Naive thymus-derived CD4-positive, alpha-beta T cell (primary cell): ENCODE measurements at regions of chr4 and their contacts with region 1.

Region 1: DNA sequence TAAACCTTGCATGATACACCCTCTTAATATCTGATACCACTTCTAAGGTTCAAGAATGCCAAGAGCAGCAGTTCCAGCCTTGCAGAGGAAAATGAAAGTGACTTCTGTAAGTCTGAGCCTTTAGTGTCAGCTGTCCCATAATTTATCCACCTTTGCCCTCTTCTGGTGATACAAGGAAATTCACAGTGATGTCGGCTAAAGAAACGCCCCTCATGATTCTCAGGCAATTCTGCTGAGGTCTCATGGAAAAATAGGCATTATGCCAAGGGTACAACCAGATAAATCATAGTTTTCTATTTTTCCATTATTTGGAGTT is 172.2 kb upstream of the CXCL13 start:
- DNase-seq: peak in 6 of 9 donors; percentile 20 to 47 (median 30)
- ATAC-seq: peak; percentile 69
- H3K4me3 ChIP-seq: no peak overlapping the region
- H3K4me3 Mint-ChIP-seq: peak overlapping the region in 3 of 10 donors; percentile 19 to 46 (median 32)
- H3K27ac ChIP-seq: no peak overlapping the region
- H3K27ac Mint-ChIP-seq: no peak overlapping the region
- H3K4me1 ChIP-seq: no peaks in the 10 kb centered on the region
- H3K4me1 Mint-ChIP-seq: peaks cover 0 to 9% (median 4%) of the 10 kb centered on the region in 7 donors
- H3K27me3 ChIP-seq: no peaks in the 10 kb centered on the region
- H3K27me3 Mint-ChIP-seq: peaks cover 0 to 4% (median 0%) of the 10 kb centered on the region in 5 donors

Region 2: GRCh38 chr4:76179398-76180318 is 1253.7 kb before region 1 on chr4:
- CTCF ChIA-PET with region 1: no interaction called
- POLR2A ChIA-PET with region 1: no interaction called
- intact Hi-C with region 1: loop called in 1 of 2 experiments (anchors 5 kb)
- DNase-seq: peak; percentile 63 to 82 (median 72)
- ATAC-seq: peak; percentile 95
- H3K4me3 ChIP-seq: no peak overlapping the region
- H3K4me3 Mint-ChIP-seq: no peak overlapping the region
- H3K27ac ChIP-seq: no peak overlapping the region
- H3K27ac Mint-ChIP-seq: peak overlapping the region in 2 of 9 donors; percentile 27 to 53
- H3K4me1 ChIP-seq: no peaks in the 10 kb centered on the region
- H3K4me1 Mint-ChIP-seq: peaks cover 0 to 3% (median 0%) of the 10 kb centered on the region in 7 donors
- H3K27me3 ChIP-seq: no peaks in the 10 kb centered on the region
- H3K27me3 Mint-ChIP-seq: no peaks in the 10 kb centered on the region

Region 3: DNA sequence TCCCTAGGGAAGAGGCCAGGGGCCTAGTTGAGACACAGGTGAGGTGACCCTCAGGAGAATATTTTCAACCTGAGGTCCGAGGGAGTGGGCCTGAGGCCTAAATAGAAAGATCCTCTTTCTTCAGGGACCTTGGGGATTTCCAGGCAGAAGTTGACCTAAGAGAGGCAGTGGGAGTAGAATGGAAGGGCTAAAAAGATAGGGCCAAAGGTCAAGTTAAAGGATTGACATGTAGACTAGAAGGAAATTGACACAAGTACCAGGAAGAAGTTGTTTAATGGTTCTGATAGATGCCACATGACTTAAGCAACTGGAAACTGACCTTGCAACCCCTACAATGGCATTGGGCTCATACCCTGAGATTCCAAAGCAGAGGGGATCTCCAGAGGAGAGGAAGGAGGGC is 921.4 kb before region 1 on chr4:
- CTCF ChIA-PET with region 1: no interaction called
- POLR2A ChIA-PET with region 1: no interaction called
- intact Hi-C with region 1: loop called in 1 of 2 experiments (anchors 1 kb)
- DNase-seq: no peak
- ATAC-seq: no peak
- H3K4me3 ChIP-seq: no peak overlapping the region
- H3K4me3 Mint-ChIP-seq: no peak overlapping the region
- H3K27ac ChIP-seq: no peak overlapping the region
- H3K27ac Mint-ChIP-seq: no peak overlapping the region
- H3K4me1 ChIP-seq: no peaks in the 10 kb centered on the region
- H3K4me1 Mint-ChIP-seq: no peaks in the 10 kb centered on the region
- H3K27me3 ChIP-seq: no peaks in the 10 kb centered on the region
- H3K27me3 Mint-ChIP-seq: peaks cover 0 to 6% (median 4%) of the 10 kb centered on the region in 5 donors

Region 4: GRCh38 chr4:77240469-77241066 is 192.8 kb before region 1 on chr4:
- CTCF ChIA-PET with region 1: interaction called, 3 read pairs
- POLR2A ChIA-PET with region 1: no interaction called
- intact Hi-C with region 1: loop called in 1 of 2 experiments (anchors 2 kb)
- DNase-seq: peak in 8 of 9 donors; percentile 11 to 59 (median 30)
- ATAC-seq: peak; percentile 47
- H3K4me3 ChIP-seq: no peak overlapping the region
- H3K4me3 Mint-ChIP-seq: no peak overlapping the region
- H3K27ac ChIP-seq: no peak overlapping the region
- H3K27ac Mint-ChIP-seq: peak overlapping the region in 1 of 9 donors; percentile 10
- H3K4me1 ChIP-seq: no peaks in the 10 kb centered on the region
- H3K4me1 Mint-ChIP-seq: no peaks in the 10 kb centered on the region
- H3K27me3 ChIP-seq: no peaks in the 10 kb centered on the region
- H3K27me3 Mint-ChIP-seq: peaks cover 3 to 12% (median 6%) of the 10 kb centered on the region in 5 donors

Region 5: DNA sequence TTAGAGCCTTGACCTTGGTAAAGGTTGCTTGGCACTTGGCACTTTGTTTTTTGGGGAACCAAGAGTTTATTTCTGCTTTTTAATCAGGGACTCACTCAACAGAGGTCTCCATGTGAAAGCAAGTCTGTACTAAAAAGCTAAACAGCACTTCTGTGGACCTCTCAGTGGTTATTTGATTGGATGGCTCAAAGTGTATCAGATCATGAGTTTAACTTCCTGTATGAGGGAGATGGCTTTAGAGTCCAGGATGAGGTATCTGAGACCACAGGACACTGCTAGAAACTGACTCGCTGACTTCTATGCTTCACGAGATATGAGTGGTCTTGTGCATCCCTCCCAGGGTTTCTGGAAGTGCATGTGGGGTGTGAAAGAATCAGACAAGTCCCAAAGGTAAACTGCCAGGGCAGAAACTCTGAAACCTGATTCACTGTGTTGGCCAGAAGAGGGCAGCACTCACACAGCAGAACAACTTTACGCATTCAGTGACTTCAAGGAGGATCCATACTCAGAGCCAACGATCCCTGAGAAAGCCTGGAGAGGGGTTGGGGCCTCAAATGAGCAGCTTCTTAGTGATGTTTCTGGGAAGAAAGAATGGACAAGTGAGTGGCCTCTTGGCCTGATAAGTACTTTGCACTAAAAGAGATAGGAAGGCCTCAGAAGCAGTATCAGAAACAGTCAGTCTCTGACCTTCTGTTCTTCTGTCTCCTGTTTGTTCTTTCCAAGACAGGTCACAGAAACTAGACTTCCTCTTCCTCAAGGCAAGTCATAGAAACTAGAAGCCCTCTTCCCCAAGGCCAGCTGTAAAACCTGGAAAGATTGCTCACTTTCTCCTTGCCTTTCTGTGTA is 48.0 kb before region 1 on chr4:
- CTCF ChIA-PET with region 1: interaction called, 4 read pairs
- POLR2A ChIA-PET with region 1: no interaction called
- intact Hi-C with region 1: loop called (anchors 1 kb)
- DNase-seq: peak in 7 of 9 donors; percentile 19 to 51 (median 39)
- ATAC-seq: peak; percentile 72
- H3K4me3 ChIP-seq: no peak overlapping the region
- H3K4me3 Mint-ChIP-seq: no peak overlapping the region
- H3K27ac ChIP-seq: no peak overlapping the region
- H3K27ac Mint-ChIP-seq: no peak overlapping the region
- H3K4me1 ChIP-seq: no peaks in the 10 kb centered on the region
- H3K4me1 Mint-ChIP-seq: peaks cover 0 to 8% (median 0%) of the 10 kb centered on the region in 7 donors
- H3K27me3 ChIP-seq: no peaks in the 10 kb centered on the region
- H3K27me3 Mint-ChIP-seq: peaks cover 0 to 8% (median 0%) of the 10 kb centered on the region in 5 donors

Region 6: DNA sequence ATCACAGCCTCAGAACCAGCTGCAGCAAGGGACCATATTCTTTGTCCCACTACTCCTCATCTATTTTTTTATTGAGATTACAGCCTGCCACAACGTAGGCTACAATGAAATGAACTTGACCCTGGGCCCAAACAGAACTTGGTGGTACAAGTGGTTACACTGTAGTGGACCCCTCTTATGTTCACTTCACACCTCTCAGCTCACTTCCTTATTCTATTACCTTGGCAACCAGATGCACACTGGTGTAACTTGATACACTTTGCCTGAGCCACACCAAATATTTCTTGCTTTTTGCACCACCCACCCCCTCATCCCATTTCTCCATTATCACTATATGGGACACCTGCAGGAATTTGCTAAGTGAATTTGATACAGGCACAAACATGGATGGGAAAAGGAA is 278.1 kb after region 1 on chr4:
- CTCF ChIA-PET with region 1: no interaction called
- POLR2A ChIA-PET with region 1: no interaction called
- intact Hi-C with region 1: no loop called
- DNase-seq: no peak
- ATAC-seq: no peak
- H3K4me3 ChIP-seq: no peak overlapping the region
- H3K4me3 Mint-ChIP-seq: no peak overlapping the region
- H3K27ac ChIP-seq: no peak overlapping the region
- H3K27ac Mint-ChIP-seq: peak overlapping the region in 5 of 9 donors; percentile 1 to 59 (median 28)
- H3K4me1 ChIP-seq: no peaks in the 10 kb centered on the region
- H3K4me1 Mint-ChIP-seq: peaks cover 3 to 25% (median 10%) of the 10 kb centered on the region in 7 donors
- H3K27me3 ChIP-seq: no peaks in the 10 kb centered on the region
- H3K27me3 Mint-ChIP-seq: no peaks in the 10 kb centered on the region